ENCODE measurements at regions of chr16 and their contacts with region 1.

Region 1: GRCh38 chr16:71917900-71918299 is 22.6 kb downstream of the IST1 start:
- DNase-seq: no peak
- ATAC-seq: no peak
- H3K4me3 ChIP-seq: no peak overlapping the region
- H3K27ac ChIP-seq: no peak overlapping the region
- H3K4me1 ChIP-seq: peaks cover 14% of the 10 kb centered on the region
- H3K27me3 ChIP-seq: no peaks in the 10 kb centered on the region
- CTCF ChIP-seq: no peak
- EP300 ChIP-seq: no peak
- POLR2A ChIP-seq: no peak
- RAD21 ChIP-seq: no peak

Region 2: DNA sequence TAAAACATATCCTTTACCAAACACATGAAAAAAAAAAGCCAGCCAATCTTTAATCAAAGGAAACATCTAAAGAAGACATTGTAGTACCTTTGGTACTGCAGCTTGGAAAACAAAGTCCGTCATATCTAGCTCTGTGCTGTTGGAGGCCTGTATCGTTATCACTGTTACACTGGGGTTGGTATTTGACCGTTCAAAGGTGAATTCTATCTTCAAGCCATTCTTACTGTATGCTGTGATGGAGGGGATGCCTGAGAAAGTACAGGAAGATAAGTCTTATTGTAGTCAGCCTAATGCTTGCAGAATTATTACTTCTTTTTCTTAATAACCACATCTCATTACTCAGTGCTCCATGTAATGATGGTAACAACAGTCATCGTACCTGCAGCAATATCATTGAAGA is 179.0 kb before region 1 on chr16:
- CTCF ChIA-PET with region 1: no interaction called
- POLR2A ChIA-PET with region 1: no interaction called
- RAD21 ChIA-PET with region 1: no interaction called
- SMC1A ChIA-PET with region 1: no interaction called
- in situ Hi-C with region 1: no loop called
- intact Hi-C with region 1: no loop called
- DNase-seq: no peak
- ATAC-seq: no peak
- H3K4me3 ChIP-seq: no peak overlapping the region
- H3K27ac ChIP-seq: no peak overlapping the region
- H3K4me1 ChIP-seq: no peaks in the 10 kb centered on the region
- H3K27me3 ChIP-seq: no peaks in the 10 kb centered on the region
- CTCF ChIP-seq: no peak
- EP300 ChIP-seq: no peak
- POLR2A ChIP-seq: no peak
- RAD21 ChIP-seq: no peak

Region 3: GRCh38 chr16:71903608-71904007 is 14.3 kb before region 1 on chr16:
- CTCF ChIA-PET with region 1: interaction called, 3 read pairs
- POLR2A ChIA-PET with region 1: interaction called, 4 read pairs
- RAD21 ChIA-PET with region 1: interaction called, 3 read pairs
- SMC1A ChIA-PET with region 1: interaction called, 10 read pairs
- in situ Hi-C with region 1: no loop called
- intact Hi-C with region 1: no loop called
- DNase-seq: no peak
- ATAC-seq: no peak
- H3K4me3 ChIP-seq: no peak overlapping the region
- H3K27ac ChIP-seq: no peak overlapping the region
- H3K4me1 ChIP-seq: peaks cover 4% of the 10 kb centered on the region; the same call in 1 of the 2 replicates
- H3K27me3 ChIP-seq: no peaks in the 10 kb centered on the region
- CTCF ChIP-seq: no peak
- EP300 ChIP-seq: no peak
- POLR2A ChIP-seq: no peak
- RAD21 ChIP-seq: no peak

Measured in GM12878 (cell line).